Dorsolateral prefrontal cortex (tissue), 120 donors: ENCODE measurements at regions of chr6 and their contacts with region 1.

Region 1: GRCh38 chr6:29847871-29848630 is 20.4 kb downstream of the HLA-G start:
- DNase-seq: peak; percentile 64 to 83 (median 75)
- H3K4me3 ChIP-seq: peak overlapping the region in 4 of 59 donors; percentile 3 to 20 (median 16)
- H3K27ac ChIP-seq: no peak overlapping the region
- H3K27me3 ChIP-seq: peaks cover 0 to 81% (median 31%) of the 10 kb centered on the region in 45 donors
- CTCF ChIP-seq: peak; percentile 86 to 100 (median 96)

Region 2: DNA sequence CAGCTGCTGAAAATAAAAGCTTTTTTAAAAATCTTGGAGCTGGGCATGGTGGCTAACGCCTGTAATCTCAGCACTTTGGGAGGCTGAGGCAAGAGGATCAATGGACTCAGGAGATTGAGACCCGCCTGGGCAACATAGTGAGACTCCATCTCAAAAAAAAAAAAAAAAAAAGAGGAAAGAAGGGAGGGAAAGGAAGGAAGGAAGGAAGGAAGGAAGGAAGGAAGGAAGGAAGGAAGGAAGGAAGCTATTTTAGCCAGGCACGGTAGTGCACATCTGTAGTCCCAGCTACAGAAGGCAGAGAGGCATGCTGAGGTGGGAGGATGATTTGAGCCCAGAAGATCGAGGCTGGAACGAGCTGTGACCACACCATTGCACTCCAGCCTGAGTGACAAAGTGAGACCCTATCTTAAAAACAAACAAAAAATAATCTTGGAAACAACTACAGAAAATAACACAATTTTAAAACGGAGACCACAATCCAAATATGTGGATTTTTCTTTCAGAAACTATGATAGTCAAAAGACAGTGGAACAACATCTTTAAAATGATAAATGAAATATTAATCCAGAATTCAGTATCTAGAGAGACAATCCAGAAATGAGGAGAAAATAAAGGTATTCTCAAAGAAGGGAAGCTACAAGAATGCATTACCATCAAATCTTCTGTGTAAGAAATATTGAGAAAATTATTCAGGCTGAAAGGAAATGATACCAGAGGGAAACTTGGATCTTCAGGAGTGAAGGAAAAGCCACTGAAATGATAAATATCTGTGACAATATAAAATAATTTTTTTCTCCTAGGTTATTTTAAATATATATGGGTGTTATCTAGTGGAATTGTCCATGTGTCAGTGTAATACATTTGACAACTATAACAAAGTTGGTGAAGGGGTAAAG is 1140.4 kb before region 1 on chr6:
- intact Hi-C with region 1: no loop called
- DNase-seq: no peak
- H3K4me3 ChIP-seq: no peak overlapping the region
- H3K27ac ChIP-seq: no peak overlapping the region
- H3K27me3 ChIP-seq: peaks cover 0 to 79% (median 41%) of the 10 kb centered on the region in 45 donors
- CTCF ChIP-seq: no peak

Region 3: GRCh38 chr6:30013291-30013922 is 165.4 kb after region 1 on chr6:
- intact Hi-C with region 1: loop called (anchors 1 to 2 kb)
- DNase-seq: peak in 1 of 10 donors; percentile 56
- H3K4me3 ChIP-seq: no peak overlapping the region
- H3K27ac ChIP-seq: no peak overlapping the region
- H3K27me3 ChIP-seq: peaks cover 0 to 22% (median 8%) of the 10 kb centered on the region in 45 donors
- CTCF ChIP-seq: peak; percentile 37 to 97 (median 86)

Region 4: DNA sequence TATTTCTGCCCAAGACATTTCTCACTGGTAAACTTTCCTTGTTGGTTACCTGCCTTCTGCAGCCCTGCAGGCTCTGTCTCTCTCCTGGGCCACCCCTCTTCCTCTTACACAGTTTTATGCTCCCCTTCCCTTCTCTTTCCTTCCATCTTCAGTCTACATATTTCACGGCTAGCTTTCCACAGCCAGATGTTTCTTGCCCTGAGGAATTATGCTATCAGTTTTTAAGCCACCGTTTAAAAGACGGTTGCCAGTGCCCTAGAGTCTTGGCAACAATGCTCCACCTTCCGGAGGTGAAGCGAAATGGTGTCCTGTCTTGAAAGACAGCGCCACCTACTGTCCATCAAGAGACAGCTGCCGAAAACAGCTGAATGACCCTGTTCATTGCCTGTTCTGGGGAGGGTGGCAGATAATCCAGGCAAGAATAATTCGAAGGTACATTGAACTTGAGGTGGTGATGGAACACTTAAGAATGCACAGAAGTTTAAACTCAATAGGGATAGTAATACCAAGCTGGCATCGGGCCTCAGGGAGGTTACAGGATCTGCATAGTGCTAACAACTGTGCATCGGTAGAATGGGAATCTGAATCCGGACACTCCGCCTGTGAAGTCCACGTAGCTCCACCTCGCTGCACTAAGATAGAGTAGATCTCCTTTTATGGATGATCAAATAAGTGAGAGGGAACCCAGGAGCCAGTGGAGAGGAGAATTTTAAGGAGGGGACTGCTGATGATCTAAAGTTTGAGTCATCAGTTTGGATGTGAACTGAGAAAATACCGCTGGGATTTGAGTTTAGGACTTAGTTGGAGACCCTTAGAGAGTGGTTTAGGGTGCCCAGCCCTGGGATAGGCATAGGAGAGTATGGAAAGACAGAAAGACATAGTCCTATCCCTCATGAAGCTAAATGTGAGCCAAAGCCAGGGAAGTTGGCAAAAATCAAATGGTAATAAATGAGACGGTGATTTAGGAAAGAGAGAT is 283.1 kb after region 1 on chr6:
- intact Hi-C with region 1: loop called in 1 of 2 experiments (anchors 5 kb)
- DNase-seq: peak in 8 of 10 donors; percentile 44 to 67 (median 54)
- H3K4me3 ChIP-seq: no peak overlapping the region
- H3K27ac ChIP-seq: no peak overlapping the region
- H3K27me3 ChIP-seq: peaks cover 0 to 90% (median 68%) of the 10 kb centered on the region in 45 donors
- CTCF ChIP-seq: peak; percentile 82 to 99 (median 97)

Region 5: DNA sequence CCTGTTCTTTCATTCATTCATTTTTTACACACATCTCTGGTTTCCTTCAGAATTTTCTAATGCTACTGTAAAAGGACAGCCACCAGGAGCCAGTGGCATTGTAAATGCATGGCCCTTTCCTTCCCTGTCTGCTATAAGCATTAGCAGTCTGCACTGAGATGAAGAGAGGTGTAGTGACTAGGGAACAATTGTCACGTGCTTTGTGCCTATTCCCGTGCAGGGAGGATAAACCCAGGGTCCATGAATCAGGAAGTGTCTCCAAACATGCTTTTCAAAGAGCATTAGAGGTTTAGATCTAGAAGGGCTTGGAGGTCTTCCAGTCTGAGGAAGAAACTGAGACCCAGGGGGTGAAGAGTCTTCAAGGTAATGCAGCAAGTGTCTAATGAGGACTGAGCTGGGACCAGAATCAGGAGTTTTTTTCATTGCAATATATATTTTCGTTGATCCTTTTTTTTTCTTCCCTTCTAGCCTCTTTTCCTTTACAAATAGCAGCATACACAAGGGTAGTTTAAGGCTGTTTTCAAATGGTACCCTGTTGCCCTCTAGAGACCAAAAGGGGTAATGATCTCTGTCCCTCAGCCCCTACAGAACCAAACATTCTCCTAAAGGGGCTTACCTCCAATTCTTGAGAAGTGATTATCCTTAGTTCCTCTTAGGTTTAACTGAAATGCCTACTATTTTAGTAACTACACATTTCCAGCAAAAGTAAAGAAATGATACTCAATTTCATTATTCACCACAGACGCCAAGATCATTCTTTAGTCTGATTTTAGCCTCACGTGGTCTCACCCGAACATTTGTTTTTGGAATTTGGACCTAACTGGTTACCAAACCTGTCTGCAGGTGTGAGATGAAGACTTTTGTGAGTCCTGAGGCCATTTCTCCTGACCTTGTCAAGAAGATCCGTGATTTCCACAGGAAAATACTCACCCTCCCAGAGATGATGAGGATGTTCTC is 321.9 kb after region 1 on chr6:
- intact Hi-C with region 1: loop called in 1 of 2 experiments (anchors 10 kb)
- DNase-seq: no peak
- H3K4me3 ChIP-seq: no peak overlapping the region
- H3K27ac ChIP-seq: no peak overlapping the region
- H3K27me3 ChIP-seq: peaks cover 2 to 88% (median 53%) of the 10 kb centered on the region in 45 donors
- CTCF ChIP-seq: peak in 55 of 56 donors; percentile 27 to 76 (median 66)